ENCODE measurements at regions of chr5 and their contacts with region 1.

Region 1: DNA sequence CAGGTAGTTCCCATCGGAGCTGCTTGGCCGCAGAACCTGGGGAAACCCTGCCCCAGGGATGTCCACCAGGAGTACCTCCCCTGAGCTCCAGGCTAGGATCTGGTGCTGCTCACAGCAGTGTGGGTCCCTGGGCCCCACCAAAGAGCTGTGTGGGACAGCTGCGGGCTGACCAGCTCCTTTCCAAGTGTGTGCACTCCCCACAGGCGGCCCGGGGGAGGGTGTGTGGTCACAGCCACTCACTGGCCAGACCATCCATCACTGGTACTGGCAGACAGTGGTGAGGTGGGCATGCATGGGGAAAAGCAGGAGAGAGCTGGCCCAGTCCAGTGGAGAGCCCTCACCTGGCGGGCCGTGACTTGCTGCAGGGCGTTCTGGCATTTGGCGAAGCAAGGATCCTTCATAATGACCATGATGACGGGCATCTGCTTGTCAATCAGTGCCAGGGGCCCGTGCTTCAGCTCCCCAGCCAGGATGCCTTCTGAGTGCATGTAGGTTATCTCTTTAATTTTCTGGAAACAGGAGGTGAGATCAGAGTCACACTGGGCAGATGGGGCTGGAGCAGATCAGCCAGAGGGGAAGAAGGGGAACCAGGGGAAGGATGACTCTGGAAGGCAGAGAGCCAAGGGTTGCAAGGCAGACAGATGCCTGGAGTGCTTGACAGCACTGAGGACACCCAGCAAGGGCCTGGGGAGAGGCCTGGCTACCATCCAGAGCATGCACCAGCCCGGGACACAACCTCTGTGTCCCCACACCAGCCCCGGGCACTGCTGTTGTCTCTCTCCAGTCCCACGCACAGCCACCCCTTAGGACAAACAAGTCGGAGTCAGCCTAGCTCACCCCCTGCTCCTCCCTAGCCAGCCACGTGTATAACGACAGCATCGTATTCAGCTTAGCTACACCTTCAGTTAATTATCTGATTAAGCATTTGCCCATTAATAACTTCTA is 12.8 kb upstream of the MAPK9 start:
- DNase-seq: no peak
- ATAC-seq: peak; percentile 39
- H3K4me3 ChIP-seq: peak overlapping the region in 1 of 3 experiments; percentile 22; a peak in 2 of 6 replicates
- H3K27ac ChIP-seq: no peak overlapping the region
- H3K4me1 ChIP-seq: peaks cover 53% of the 10 kb centered on the region
- H3K27me3 ChIP-seq: peaks cover 0 to 2% of the 10 kb centered on the region in 2 experiments; a peak in 2 of 5 replicates
- CTCF ChIP-seq: no peak
- EP300 ChIP-seq: no peak
- POLR2A ChIP-seq: no peak
- RAD21 ChIP-seq: no peak

Region 2: DNA sequence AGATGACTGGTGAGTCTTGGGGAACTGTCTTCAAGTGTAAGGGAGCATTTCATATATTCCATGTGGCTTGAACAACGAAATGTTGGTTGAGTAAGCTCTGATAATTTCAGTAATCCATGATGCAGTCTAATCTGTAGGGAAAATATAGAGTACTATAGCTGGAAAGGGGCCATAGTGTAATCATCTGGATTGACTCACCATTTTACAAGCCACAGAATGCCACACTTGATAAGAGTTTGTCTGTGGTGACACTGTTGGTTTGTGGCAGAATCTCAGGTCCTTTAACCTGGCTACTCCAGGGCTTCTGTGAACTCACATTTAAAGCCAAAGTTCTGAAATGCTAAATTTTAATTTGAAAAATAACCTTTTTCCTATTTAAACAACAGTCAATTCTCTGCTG is 588.4 kb before region 1 on chr5:
- CTCF ChIA-PET with region 1: no interaction called
- POLR2A ChIA-PET with region 1: no interaction called
- in situ Hi-C with region 1: no loop called
- intact Hi-C with region 1: no loop called
- DNase-seq: no peak
- ATAC-seq: no peak
- H3K4me3 ChIP-seq: no peak overlapping the region
- H3K27ac ChIP-seq: no peak overlapping the region
- H3K4me1 ChIP-seq: no peaks in the 10 kb centered on the region
- H3K27me3 ChIP-seq: no peaks in the 10 kb centered on the region
- CTCF ChIP-seq: no peak
- EP300 ChIP-seq: no peak
- POLR2A ChIP-seq: no peak
- RAD21 ChIP-seq: no peak

Region 3: DNA sequence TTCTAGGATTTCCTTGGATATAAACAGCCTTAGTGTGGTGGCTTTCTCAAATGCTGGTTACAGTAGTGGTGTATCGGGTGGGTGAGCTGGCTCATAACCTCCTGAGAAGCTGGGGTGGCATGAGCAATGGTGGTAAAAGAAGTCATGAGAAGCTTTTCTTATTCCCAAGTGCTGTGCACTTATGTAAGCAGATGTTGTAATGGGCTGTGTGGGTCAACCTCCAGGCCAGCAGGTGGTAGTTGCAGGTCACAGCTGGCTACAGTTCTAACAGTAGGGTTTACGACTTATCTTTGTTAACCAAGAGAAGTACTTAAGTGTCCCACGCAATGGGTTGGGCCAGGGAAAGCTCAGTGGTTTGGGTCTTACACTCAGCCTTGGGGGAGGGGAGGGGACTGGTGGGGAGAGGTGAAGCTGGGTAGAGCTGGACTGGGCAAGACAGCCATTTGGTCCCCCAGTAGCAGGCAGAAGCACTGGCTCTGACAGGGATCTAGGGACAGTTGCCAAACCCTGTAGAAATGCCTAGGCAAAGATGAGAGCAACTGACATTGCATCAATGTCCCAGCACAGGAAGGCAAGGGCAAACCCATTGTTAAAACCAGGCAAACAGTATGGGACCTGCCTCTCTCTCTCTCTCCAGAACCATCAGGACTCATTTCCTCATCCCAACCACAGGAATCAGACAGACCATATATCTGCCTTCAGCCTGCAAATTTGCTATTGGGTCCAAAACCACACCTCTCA is 309.9 kb before region 1 on chr5:
- CTCF ChIA-PET with region 1: no interaction called
- POLR2A ChIA-PET with region 1: no interaction called
- in situ Hi-C with region 1: no loop called
- intact Hi-C with region 1: no loop called
- DNase-seq: no peak
- ATAC-seq: no peak
- H3K4me3 ChIP-seq: no peak overlapping the region
- H3K27ac ChIP-seq: no peak overlapping the region
- H3K4me1 ChIP-seq: no peaks in the 10 kb centered on the region
- H3K27me3 ChIP-seq: no peaks in the 10 kb centered on the region
- CTCF ChIP-seq: 0 out of 2 replicates have a peak, but pooled peaks have one; percentile 8
- EP300 ChIP-seq: no peak
- POLR2A ChIP-seq: no peak
- RAD21 ChIP-seq: no peak

Region 4: GRCh38 chr5:180284149-180284548 is 20.6 kb before region 1 on chr5:
- CTCF ChIA-PET with region 1: no interaction called
- POLR2A ChIA-PET with region 1: no interaction called
- in situ Hi-C with region 1: no loop called
- intact Hi-C with region 1: no loop called
- DNase-seq: no peak
- ATAC-seq: no peak
- H3K4me3 ChIP-seq: no peak overlapping the region
- H3K27ac ChIP-seq: no peak overlapping the region
- H3K4me1 ChIP-seq: peaks cover 24% of the 10 kb centered on the region
- H3K27me3 ChIP-seq: no peaks in the 10 kb centered on the region
- CTCF ChIP-seq: no peak
- EP300 ChIP-seq: no peak
- POLR2A ChIP-seq: no peak
- RAD21 ChIP-seq: no peak

Region 5: GRCh38 chr5:180366326-180366725 is 61.6 kb after region 1 on chr5:
- CTCF ChIA-PET with region 1: no interaction called
- POLR2A ChIA-PET with region 1: no interaction called
- in situ Hi-C with region 1: no loop called
- intact Hi-C with region 1: no loop called
- DNase-seq: no peak
- ATAC-seq: no peak
- H3K4me3 ChIP-seq: no peak overlapping the region
- H3K27ac ChIP-seq: no peak overlapping the region
- H3K4me1 ChIP-seq: no peaks in the 10 kb centered on the region
- H3K27me3 ChIP-seq: peaks cover 6 to 33% of the 10 kb centered on the region in 2 experiments; a peak in 4 of 5 replicates
- CTCF ChIP-seq: no peak
- EP300 ChIP-seq: no peak
- POLR2A ChIP-seq: no peak
- RAD21 ChIP-seq: no peak

Region 6: GRCh38 chr5:180885872-180886418 is 581.2 kb after region 1 on chr5:
- CTCF ChIA-PET with region 1: no interaction called
- POLR2A ChIA-PET with region 1: no interaction called
- in situ Hi-C with region 1: no loop called
- intact Hi-C with region 1: loop called (anchors 10 kb)
- DNase-seq: peak; percentile 90
- ATAC-seq: peak; percentile 100
- H3K4me3 ChIP-seq: peak overlapping the region in 1 of 3 experiments; percentile 50; a peak in 2 of 6 replicates
- H3K27ac ChIP-seq: peak overlapping the region; percentile 32
- H3K4me1 ChIP-seq: peaks cover 21% of the 10 kb centered on the region
- H3K27me3 ChIP-seq: no peaks in the 10 kb centered on the region
- CTCF ChIP-seq: peak; percentile 49
- EP300 ChIP-seq: peak in 1 of 2 experiments; percentile 55; a peak in 2 of 4 replicates
- POLR2A ChIP-seq: no peak
- RAD21 ChIP-seq: peak; percentile 45; the same call in 1 of the 2 replicates